Heart right ventricle (tissue), 16 donors: ENCODE measurements at regions of chr9 and their contacts with region 1.

Region 1: GRCh38 chr9:92590377-92590776 is 54.6 kb upstream of the ECM2 start:
- DNase-seq: peak; percentile 59 to 84
- ATAC-seq: peak; percentile 94 to 99 (median 98)
- H3K4me3 ChIP-seq: no peak overlapping the region
- H3K27ac ChIP-seq: peak overlapping the region in 9 of 10 donors; percentile 21 to 77 (median 63)
- H3K4me1 ChIP-seq: peaks cover 3 to 45% (median 27%) of the 10 kb centered on the region in 9 donors
- H3K27me3 ChIP-seq: no peaks in the 10 kb centered on the region
- CTCF ChIP-seq: no peak

Region 2: DNA sequence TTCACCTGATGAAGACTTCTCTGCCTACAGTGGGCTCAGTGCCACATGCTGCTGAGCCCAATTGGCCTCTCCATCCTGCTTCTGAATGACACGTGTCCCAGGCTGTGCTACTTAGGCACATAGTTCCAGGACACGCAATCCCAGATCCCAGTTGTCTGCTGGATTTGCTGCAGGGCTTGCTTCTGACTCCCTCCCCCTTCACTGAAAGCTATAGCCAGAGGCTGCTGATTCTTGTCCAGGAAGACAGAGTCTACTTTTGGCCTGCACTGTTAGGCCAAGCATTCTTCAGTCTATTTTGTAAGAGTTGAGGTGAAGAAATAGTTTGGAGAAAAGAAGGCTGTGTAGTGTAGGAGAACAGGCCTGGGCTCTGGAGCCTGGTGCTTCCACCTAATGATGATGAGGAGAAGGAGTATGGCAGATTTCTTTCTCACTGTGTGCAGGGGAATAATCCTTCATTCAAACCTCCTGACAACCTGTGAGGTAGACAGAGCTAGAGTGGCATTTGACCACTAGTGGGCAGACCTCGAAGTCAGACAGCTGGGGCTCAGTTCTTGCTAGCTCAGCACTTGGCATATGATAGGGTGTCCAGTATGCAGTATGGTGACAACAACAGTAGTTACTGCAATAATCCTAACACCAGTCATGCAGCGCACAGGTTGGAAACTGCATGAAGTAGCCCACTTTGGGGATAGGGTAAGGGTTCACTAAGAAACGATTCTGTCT is 88.5 kb before region 1 on chr9:
- intact Hi-C with region 1: loop called in 1 of 10 experiments (anchors 10 kb)
- DNase-seq: no peak
- ATAC-seq: peak; percentile 55 to 85 (median 76)
- H3K4me3 ChIP-seq: no peak overlapping the region
- H3K27ac ChIP-seq: peak overlapping the region in 4 of 10 donors; percentile 1 to 67 (median 16)
- H3K4me1 ChIP-seq: peaks cover 2 to 51% (median 20%) of the 10 kb centered on the region in 9 donors
- H3K27me3 ChIP-seq: no peaks in the 10 kb centered on the region
- CTCF ChIP-seq: peak in 7 of 9 donors; percentile 42 to 56 (median 45)

Region 3: GRCh38 chr9:92535940-92536850 is 54.2 kb before region 1 on chr9 and contains the start of gene ECM2:
- intact Hi-C with region 1: loop called in 2 of 10 experiments (anchors 5 kb)
- DNase-seq: peak in 1 of 2 donors; percentile 20
- ATAC-seq: peak in 7 of 8 donors; percentile 27 to 84 (median 76)
- H3K4me3 ChIP-seq: peak within 1 kb of the TSS in 8 of 10 donors; percentile 26 to 54 (median 38)
- H3K27ac ChIP-seq: peak within 1 kb of the TSS; percentile 40 to 86 (median 68)
- H3K4me1 ChIP-seq: peaks cover 0 to 42% (median 16%) of the 10 kb centered on the region in 9 donors
- H3K27me3 ChIP-seq: no peaks in the 10 kb centered on the region
- CTCF ChIP-seq: no peak
- total RNA-seq, gene ECM2: 4.2 to 14.9 (median 9.2) TPM

Region 4: GRCh38 chr9:92650839-92651621 is 60.7 kb after region 1 on chr9:
- intact Hi-C with region 1: no loop called
- DNase-seq: peak; percentile 57
- ATAC-seq: peak; percentile 78 to 91 (median 86)
- H3K4me3 ChIP-seq: no peak overlapping the region
- H3K27ac ChIP-seq: peak overlapping the region in 6 of 10 donors; percentile 2 to 56 (median 28)
- H3K4me1 ChIP-seq: peaks cover 0 to 34% (median 16%) of the 10 kb centered on the region in 9 donors
- H3K27me3 ChIP-seq: no peaks in the 10 kb centered on the region
- CTCF ChIP-seq: no peak

Region 5: DNA sequence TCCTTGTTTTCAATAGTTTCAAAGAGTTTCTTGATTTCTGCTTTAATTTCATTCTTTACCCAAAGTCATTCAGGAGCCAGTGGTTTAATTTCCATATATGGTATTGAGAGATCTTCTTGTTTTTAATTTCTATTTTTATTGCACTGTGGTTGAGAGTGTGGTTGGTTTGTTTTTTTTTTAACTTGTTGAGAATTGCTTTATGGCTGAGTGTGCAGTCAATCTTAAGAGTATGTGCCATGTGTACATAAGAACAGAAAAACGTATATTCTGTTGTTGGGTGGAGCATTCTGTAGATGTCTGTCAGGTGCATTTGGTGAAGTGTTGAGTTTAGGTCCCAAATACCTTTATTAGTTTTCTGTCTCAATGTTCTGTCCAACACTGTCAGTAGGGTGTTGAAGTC is 106.2 kb after region 1 on chr9:
- intact Hi-C with region 1: no loop called
- DNase-seq: no peak
- ATAC-seq: no peak
- H3K4me3 ChIP-seq: no peak overlapping the region
- H3K27ac ChIP-seq: no peak overlapping the region
- H3K4me1 ChIP-seq: no peaks in the 10 kb centered on the region
- H3K27me3 ChIP-seq: no peaks in the 10 kb centered on the region
- CTCF ChIP-seq: no peak

Region 6: DNA sequence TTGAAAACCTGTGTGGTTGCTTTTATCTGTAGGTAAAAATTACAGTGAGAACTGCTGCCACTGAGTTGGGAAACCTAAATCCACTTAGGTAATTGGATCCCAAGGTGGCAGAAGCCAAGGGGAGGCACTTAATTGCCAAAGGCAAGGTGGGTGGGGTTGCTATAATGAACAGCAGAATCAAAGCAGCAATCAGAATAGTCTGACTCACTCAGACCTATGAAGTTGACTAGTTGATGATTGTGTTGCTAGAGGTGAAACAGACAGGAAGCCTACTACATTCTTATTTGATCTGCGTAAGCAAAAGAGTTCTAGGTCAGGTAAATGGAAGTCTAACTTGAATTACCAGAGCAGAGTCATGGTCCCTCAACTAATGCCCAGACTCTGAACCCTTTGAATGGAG is 191.5 kb after region 1 on chr9:
- intact Hi-C with region 1: no loop called
- DNase-seq: no peak
- ATAC-seq: no peak
- H3K4me3 ChIP-seq: no peak overlapping the region
- H3K27ac ChIP-seq: no peak overlapping the region
- H3K4me1 ChIP-seq: no peaks in the 10 kb centered on the region
- H3K27me3 ChIP-seq: no peaks in the 10 kb centered on the region
- CTCF ChIP-seq: no peak